GM12878 (cell line): ENCODE measurements at regions of chr1 and their contacts with region 1.

Region 1: GRCh38 chr1:201023517-201023902 is at the start of gene KIF21B:
- DNase-seq: no peak
- ATAC-seq: peak; percentile 68
- H3K4me3 ChIP-seq: peak within 1 kb of the TSS; percentile 93
- H3K27ac ChIP-seq: peak within 1 kb of the TSS; percentile 94
- H3K4me1 ChIP-seq: peaks cover 81% of the 10 kb centered on the region
- H3K27me3 ChIP-seq: no peaks in the 10 kb centered on the region
- CTCF ChIP-seq: no peak
- EP300 ChIP-seq: no peak
- POLR2A ChIP-seq: peak; percentile 74
- RAD21 ChIP-seq: no peak
- polyA plus RNA-seq, gene KIF21B: 2.3 to 2.9 TPM

Region 2: DNA sequence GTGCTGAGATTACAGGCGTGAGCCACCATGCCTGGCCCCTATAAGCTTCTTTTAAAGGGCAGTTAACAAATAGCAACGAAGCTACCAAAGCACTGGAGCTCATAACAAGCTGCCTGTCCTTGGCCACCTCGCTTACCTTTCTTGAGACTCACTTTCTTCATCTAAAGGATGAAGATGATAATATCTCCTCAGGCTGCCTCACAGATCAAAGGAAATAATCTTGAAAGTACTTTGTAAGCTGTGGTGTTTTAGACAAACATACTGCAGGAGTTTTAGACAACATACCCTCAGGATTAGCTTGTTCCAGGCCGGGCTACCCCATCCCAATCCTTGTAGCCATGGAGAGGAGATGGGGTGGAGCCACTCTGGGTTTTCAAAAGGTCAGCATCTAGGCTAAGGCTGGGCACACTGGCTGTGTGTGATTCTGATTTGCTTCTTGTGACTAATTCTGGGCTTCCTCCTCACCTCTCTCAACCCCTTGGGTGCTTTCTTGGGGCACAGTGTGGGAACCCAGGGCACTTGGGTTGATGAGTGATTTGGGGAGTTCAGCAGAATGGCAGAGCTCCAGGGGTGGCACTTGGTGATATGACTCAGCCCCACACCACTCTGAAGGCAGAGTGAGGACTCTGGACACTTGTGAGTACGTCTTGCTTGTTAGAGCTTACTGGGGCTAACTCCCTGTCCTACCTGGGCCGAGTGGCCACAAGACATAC is 145.5 kb before region 1 on chr1:
- CTCF ChIA-PET with region 1: interaction called, 14 read pairs
- POLR2A ChIA-PET with region 1: interaction called, 5 read pairs
- RAD21 ChIA-PET with region 1: interaction called, 8 read pairs
- SMC1A ChIA-PET with region 1: interaction called, 6 read pairs
- in situ Hi-C with region 1: no loop called
- intact Hi-C with region 1: no loop called
- DNase-seq: peak; percentile 89
- ATAC-seq: peak; percentile 84
- H3K4me3 ChIP-seq: no peak overlapping the region
- H3K27ac ChIP-seq: no peak overlapping the region
- H3K4me1 ChIP-seq: peaks cover 17% of the 10 kb centered on the region
- H3K27me3 ChIP-seq: no peaks in the 10 kb centered on the region
- CTCF ChIP-seq: no peak
- EP300 ChIP-seq: peak in 1 of 2 experiments; percentile 58; a peak in 1 of 4 replicates
- POLR2A ChIP-seq: no peak
- RAD21 ChIP-seq: no peak

Region 3: GRCh38 chr1:200896531-200897196 is 126.8 kb before region 1 on chr1:
- CTCF ChIA-PET with region 1: interaction called, 16 read pairs
- POLR2A ChIA-PET with region 1: interaction called, 5 read pairs
- RAD21 ChIA-PET with region 1: interaction called, 38 read pairs
- SMC1A ChIA-PET with region 1: interaction called, 12 read pairs
- in situ Hi-C with region 1: no loop called
- intact Hi-C with region 1: loop called (anchors 5 kb)
- DNase-seq: no peak
- ATAC-seq: no peak
- H3K4me3 ChIP-seq: no peak overlapping the region
- H3K27ac ChIP-seq: no peak overlapping the region
- H3K4me1 ChIP-seq: peaks cover 19% of the 10 kb centered on the region
- H3K27me3 ChIP-seq: no peaks in the 10 kb centered on the region
- CTCF ChIP-seq: no peak
- EP300 ChIP-seq: no peak
- POLR2A ChIP-seq: no peak
- RAD21 ChIP-seq: no peak

Region 4: DNA sequence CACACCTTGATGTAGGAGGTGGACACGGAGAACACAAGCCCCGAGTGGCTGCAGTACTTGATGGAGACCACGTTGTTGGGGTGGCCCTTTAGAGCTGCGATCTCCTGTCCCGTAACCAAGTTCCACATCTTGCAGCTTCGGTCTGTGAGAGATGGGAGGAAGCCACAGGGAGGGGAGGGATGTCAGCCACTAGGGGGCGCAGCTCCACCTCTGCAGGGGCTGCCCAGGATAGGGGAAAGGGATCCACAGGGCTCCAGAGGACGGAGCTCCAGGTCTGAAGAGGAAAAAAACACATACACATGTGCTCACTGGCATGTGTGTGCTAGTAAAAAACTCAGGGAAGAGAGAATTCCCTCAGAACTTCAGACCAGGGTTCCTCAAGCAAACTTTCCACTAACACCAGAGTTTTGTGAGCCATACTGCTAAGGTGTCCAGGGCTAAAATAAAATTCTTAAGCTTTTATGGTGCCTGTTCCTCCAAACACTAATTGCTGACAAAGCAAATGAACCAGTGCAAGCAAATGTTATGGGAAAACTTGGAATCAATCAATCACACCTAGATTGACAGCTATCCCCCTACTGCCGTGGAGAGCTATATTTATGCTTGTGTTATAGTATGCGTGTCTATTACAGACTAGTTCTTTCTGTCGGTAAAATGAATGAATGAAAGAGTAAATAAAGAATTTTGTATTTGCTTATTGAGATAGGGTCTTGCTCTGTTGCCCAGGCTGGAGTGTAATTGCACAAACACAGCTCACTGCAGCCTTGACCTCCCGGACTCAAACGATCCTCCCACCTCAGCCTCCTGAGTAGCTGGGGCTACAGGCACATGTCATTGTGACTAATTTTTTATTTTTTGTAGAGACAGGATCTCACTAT is 43.7 kb before region 1 on chr1:
- CTCF ChIA-PET with region 1: interaction called, 48 read pairs
- POLR2A ChIA-PET with region 1: interaction called, 5 read pairs
- RAD21 ChIA-PET with region 1: interaction called, 239 read pairs
- SMC1A ChIA-PET with region 1: interaction called, 12 read pairs
- in situ Hi-C with region 1: no loop called
- intact Hi-C with region 1: no loop called
- DNase-seq: no peak
- ATAC-seq: peak; percentile 89
- H3K4me3 ChIP-seq: no peak overlapping the region
- H3K27ac ChIP-seq: no peak overlapping the region
- H3K4me1 ChIP-seq: no peaks in the 10 kb centered on the region
- H3K27me3 ChIP-seq: no peaks in the 10 kb centered on the region
- CTCF ChIP-seq: peak; percentile 53 to 81 (median 79)
- EP300 ChIP-seq: no peak
- POLR2A ChIP-seq: no peak
- RAD21 ChIP-seq: peak; percentile 71

Region 5: DNA sequence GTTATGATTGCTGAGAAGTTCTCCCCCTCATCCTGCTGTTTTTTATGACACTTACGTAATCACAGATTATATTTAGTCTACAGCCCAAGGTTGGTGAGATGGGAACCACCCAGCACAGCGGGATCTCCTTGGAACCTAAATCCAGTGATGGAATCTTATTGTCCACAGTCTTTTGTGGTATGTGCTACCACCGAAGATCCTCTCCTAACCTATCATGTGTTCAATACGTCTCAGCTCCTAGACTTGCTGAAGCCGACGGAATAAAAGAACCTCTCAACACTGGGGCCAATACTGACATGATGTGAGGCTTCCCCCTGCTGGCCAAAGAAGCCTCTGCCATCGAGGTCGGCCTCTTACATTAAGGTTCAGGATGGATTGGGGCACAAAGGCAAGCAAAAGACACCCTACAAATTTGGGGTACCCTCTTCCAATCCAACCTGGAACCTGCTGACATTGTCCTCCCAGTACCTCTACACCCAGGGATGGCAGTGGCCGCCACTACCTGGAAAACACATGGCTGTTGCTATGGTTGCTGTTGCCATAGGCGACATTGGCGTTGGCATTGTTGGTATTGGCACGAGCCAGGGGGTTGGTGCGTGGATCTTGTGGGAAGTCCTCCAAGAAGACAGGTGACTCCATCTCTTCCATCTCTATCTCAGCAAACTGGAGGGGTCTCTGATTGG is 19.4 kb after region 1 on chr1:
- CTCF ChIA-PET with region 1: interaction called, 250 read pairs
- POLR2A ChIA-PET with region 1: interaction called, 7 read pairs
- RAD21 ChIA-PET with region 1: interaction called, 24 read pairs
- SMC1A ChIA-PET with region 1: interaction called, 91 read pairs
- in situ Hi-C with region 1: no loop called
- intact Hi-C with region 1: no loop called
- DNase-seq: no peak
- ATAC-seq: peak; percentile 97
- H3K4me3 ChIP-seq: no peak overlapping the region
- H3K27ac ChIP-seq: no peak overlapping the region
- H3K4me1 ChIP-seq: no peaks in the 10 kb centered on the region
- H3K27me3 ChIP-seq: no peaks in the 10 kb centered on the region; a peak in 1 of 4 replicates
- CTCF ChIP-seq: peak; percentile 87 to 94 (median 93); a peak in 5 of 6 replicates
- EP300 ChIP-seq: no peak
- POLR2A ChIP-seq: no peak
- RAD21 ChIP-seq: peak; percentile 99